ENCODE measurements at regions of chr1 and their contacts with region 1.

Region 1: GRCh38 chr1:165235777-165236291 is 120.7 kb downstream of the LMX1A start:
- DNase-seq: peak; percentile 15
- ATAC-seq: no peak
- H3K4me3 Mint-ChIP-seq: no peak overlapping the region
- H3K27ac Mint-ChIP-seq: no peak overlapping the region
- H3K4me1 Mint-ChIP-seq: peaks cover 6% of the 10 kb centered on the region
- H3K27me3 Mint-ChIP-seq: peaks cover 40% of the 10 kb centered on the region

Region 2: GRCh38 chr1:165144757-165145397 is 91.0 kb before region 1 on chr1:
- CTCF ChIA-PET with region 1: interaction called, 4 read pairs
- POLR2A ChIA-PET with region 1: no interaction called
- intact Hi-C with region 1: loop called in 1 of 2 experiments (anchors 10 kb)
- DNase-seq: peak; percentile 57
- ATAC-seq: peak; percentile 30
- H3K4me3 Mint-ChIP-seq: no peak overlapping the region
- H3K27ac Mint-ChIP-seq: no peak overlapping the region
- H3K4me1 Mint-ChIP-seq: no peaks in the 10 kb centered on the region
- H3K27me3 Mint-ChIP-seq: peaks cover 15% of the 10 kb centered on the region

Region 3: DNA sequence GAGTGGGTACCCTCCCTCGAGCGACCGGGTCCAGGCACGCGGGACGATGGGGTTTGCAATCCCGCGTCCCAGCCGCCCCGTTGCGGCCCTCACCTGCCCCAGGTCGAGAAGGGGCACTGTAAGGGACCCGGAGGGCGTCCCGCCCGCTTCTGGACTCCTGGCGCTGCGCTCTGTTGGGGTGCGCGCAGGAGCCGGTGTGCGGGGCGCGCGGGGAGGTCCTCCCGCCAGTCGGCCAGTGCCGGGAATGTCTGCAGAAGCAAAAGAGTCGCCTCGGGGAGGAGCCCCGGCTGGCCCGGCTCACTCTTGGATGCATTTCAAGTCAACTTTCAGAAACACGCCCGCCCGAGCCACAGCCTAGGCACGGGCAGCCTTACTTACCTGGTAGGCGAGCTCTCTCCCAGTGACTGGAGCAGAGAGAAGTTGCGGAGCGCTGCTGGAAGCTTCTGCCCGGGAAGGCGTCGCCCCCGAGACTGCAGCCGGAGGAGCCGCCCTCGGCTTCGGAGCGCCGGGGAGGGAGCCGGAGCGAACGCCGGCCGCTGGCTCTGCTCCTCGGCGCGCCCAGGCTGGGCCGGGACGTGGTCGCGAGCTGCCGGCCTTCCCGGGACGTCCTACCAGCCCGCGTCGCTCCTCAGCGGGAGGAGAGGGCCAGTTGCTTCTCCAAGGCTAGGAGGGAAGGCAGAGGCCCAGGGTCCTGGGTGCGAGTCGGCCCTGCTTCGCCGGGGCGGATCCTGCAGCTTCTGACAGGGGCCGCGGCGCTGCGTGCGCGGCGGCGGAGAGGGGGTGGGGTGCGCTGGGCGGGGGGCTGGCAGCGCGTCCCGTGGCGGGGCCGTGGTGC is 120.4 kb after region 1 on chr1 and contains the start of gene LMX1A:
- CTCF ChIA-PET with region 1: no interaction called
- POLR2A ChIA-PET with region 1: no interaction called
- intact Hi-C with region 1: loop called (anchors 5 to 10 kb)
- DNase-seq: no peak
- ATAC-seq: no peak
- H3K4me3 Mint-ChIP-seq: no peak within 1 kb of the TSS
- H3K27ac Mint-ChIP-seq: no peak within 1 kb of the TSS
- H3K4me1 Mint-ChIP-seq: peaks cover 12% of the 10 kb centered on the region
- H3K27me3 Mint-ChIP-seq: peaks cover 63% of the 10 kb centered on the region
- total RNA-seq, gene LMX1A: not detected